Activated T-helper 2 cell treated with anti-CD3 and anti-CD28 coated beads, Interferon-gamma antibody, Interleukin-2, Interleukin-4, amounts not matched to agents 10 μg/mL and 5 μg/mL and 100 μg/mL, durations not matched to agents 14 hours and 24 hours and 36 hours (primary cell): ENCODE measurements at regions of chr1 and their contacts with region 1.

Region 1: GRCh38 chr1:169601093-169601881 is 15.0 kb upstream of the F5 start:
- DNase-seq: no peak
- H3K4me3 Mint-ChIP-seq: no peak overlapping the region
- H3K27ac Mint-ChIP-seq: no peak overlapping the region
- H3K4me1 Mint-ChIP-seq: peaks cover 42% of the 10 kb centered on the region
- H3K27me3 Mint-ChIP-seq: no peaks in the 10 kb centered on the region

Region 2: GRCh38 chr1:169550294-169550693 is 51.0 kb before region 1 on chr1:
- intact Hi-C with region 1: no loop called
- DNase-seq: no peak
- H3K4me3 Mint-ChIP-seq: no peak overlapping the region
- H3K27ac Mint-ChIP-seq: no peak overlapping the region
- H3K4me1 Mint-ChIP-seq: peaks cover 11% of the 10 kb centered on the region
- H3K27me3 Mint-ChIP-seq: no peaks in the 10 kb centered on the region

Region 3: DNA sequence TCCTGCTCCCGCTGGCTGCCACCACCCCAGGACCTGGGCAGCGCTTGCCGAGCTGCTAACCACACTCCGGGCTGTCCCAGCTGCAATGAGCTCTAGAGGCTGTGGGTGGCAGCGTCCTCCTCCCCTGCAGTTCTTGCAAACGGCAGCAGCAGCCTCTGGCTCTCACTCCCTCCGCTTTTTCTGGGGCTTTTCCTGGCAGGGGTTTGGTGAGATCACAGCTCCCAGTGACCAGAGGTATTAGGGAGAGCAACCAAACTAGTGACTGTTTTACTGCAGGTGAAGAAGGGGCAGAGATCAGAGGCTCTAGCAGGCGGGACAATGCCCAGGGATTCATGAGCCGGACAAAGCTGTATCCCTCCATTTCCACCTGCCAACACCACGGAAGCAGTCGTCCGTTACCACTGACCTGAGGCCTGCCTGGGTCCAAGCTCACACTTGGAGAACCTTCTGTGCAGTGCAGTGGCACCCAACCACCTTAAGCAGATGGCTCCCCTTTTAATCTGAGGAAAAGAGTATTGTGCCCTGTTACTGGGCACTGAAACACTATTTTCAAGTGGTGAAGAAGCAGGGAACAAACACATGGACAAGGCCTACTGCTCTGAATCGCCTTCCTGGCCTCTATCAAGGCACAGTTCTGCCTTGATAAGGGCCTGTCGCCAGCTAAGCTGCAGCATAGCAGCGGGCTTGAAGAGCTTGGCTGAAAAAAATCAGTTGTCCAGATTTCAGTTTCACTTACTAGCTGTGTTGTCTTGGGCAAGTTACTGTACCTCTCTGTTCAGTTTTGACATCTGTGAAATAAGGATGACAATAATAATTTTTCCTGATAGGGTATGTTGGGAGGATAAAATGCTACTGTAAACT is 14.7 kb before region 1 on chr1 and contains the start of gene F5:
- intact Hi-C with region 1: loop called (anchors 2 kb)
- DNase-seq: peak; percentile 69
- H3K4me3 Mint-ChIP-seq: peak within 1 kb of the TSS; percentile 89
- H3K27ac Mint-ChIP-seq: peak within 1 kb of the TSS; percentile 83
- H3K4me1 Mint-ChIP-seq: peaks cover 59% of the 10 kb centered on the region
- H3K27me3 Mint-ChIP-seq: no peaks in the 10 kb centered on the region
- total RNA-seq, gene F5: 25.0 and 26.0 TPM in 2 replicates

Region 4: DNA sequence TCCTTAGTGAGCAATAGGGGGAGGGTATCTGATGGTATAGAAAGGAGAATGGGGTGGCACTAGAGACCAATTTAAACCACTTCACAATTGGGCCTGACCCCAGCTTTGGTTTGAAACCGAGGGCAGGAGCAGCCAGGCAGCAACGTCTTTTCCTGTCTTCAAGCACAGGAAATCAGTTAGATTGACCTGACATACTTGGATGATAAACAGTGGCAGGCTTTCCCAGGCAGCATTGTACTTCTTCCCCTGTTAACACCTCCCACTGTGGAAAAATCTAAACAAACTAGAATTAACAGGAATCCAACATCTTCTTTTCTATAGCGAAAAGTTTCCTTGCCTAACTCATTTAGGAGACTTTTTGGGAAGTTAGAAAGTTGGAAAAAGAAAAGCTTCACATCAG is 69.5 kb after region 1 on chr1:
- intact Hi-C with region 1: loop called (anchors 2 kb)
- DNase-seq: no peak
- H3K4me3 Mint-ChIP-seq: no peak overlapping the region
- H3K27ac Mint-ChIP-seq: no peak overlapping the region
- H3K4me1 Mint-ChIP-seq: peaks cover 33% of the 10 kb centered on the region
- H3K27me3 Mint-ChIP-seq: no peaks in the 10 kb centered on the region